ENCODE measurements at regions of chr17 and their contacts with region 1.

Region 1: DNA sequence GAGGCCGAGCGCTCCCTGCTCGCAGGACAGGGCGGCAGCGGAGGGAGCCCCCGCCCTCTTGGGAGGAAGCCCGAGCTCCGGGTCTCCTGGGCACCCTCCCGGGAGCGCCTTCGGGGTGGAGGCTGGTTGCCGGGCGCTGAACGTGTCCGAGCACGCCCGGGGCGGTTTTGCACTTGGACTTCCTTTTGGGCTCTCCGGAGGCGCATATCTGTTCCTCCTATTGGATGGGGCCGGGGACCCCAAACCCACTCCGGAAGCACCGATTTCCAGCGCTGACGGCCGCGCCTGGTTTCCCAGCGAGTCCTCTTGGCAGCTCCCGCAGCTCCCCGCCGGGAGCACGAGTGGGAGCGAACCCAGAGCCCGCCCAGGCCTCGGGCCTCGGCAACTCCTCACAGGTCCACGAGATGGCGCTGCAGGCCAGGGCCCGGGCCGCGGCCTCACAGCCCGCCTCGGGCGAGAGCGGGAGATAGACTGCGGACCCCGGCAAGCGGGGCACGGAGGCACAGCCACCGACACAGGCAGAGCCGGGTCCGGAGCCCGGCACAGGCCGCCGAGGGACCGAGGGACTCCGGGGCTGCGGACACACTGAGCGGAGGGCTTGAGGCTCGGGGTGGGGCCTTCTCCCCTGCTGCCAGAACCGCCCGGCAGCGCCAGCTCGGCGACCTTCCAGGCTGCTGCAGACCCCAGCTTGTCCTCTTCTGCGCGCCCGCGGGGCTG is 12.7 kb downstream of the TBX2 start:
- DNase-seq: peak; percentile 74
- H3K4me3 ChIP-seq: peak overlapping the region; percentile 62
- H3K27ac ChIP-seq: no peak overlapping the region
- H3K4me1 ChIP-seq: peaks cover 16% of the 10 kb centered on the region
- CTCF ChIP-seq: peak; percentile 92

Region 2: DNA sequence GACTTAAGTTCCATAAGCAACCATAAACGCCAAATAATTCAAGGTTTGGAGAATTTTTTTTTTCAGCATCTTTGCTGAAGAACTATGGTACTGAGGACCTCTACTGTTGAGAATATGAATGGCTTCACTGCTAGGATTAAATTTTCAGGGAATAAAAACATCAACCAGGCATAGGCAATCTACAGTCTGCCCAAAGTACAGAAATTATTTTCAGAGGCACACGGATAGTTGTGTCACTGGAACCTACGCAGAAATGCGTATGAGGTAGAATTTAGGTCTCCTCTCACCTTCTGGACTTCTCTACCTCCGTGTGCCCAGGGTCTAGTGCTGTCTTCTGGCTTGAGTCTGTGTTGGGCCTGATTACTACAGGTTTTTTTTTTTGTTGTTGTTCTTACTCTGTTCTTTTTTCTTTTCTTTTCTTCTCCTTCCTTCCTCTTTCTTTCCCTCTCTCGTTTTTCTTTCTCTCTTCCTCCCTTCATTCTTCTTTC is 139.0 kb after region 1 on chr17:
- CTCF ChIA-PET with region 1: no interaction called
- POLR2A ChIA-PET with region 1: no interaction called
- intact Hi-C with region 1: loop called (anchors 1 kb)
- DNase-seq: peak; percentile 58
- H3K4me3 ChIP-seq: no peak overlapping the region
- H3K27ac ChIP-seq: no peak overlapping the region
- H3K4me1 ChIP-seq: peaks cover 42% of the 10 kb centered on the region
- CTCF ChIP-seq: peak; percentile 90

Region 3: DNA sequence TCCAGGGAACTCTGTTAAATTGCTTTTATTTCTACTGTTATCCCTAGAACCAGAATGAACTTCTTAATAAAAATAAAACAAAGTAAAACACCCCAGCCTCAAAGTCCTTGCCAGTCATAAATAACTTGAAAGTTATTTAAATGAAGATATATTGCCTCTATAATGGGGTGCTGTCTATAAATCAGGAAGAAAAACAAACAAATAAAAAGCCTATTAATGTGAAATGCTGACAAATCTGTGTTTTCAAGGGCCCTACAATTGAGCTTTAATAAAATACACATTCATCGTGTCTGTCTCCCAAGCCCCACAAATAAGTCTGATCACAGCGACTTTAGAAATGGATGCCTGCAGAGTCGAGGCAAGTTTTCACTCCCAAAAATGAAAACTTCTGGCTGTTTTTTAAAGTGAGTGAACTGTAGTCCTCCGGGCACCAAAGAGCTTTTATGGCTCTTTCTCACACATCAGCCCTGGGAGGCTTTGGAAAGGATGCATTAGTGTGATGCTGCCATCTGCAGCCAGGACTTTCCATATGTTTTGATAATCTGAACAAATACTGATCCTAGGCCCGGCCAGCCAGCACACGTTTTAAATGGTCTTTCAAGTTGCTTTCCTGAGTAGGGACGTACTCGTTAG is 162.4 kb after region 1 on chr17:
- CTCF ChIA-PET with region 1: interaction called, 3 read pairs
- POLR2A ChIA-PET with region 1: interaction called, 3 read pairs
- intact Hi-C with region 1: loop called (anchors 1 kb)
- DNase-seq: peak; percentile 65
- H3K4me3 ChIP-seq: no peak overlapping the region
- H3K27ac ChIP-seq: no peak overlapping the region
- H3K4me1 ChIP-seq: no peaks in the 10 kb centered on the region
- CTCF ChIP-seq: peak; percentile 73

Region 4: GRCh38 chr17:61635913-61636432 is 223.7 kb after region 1 on chr17:
- CTCF ChIA-PET with region 1: no interaction called
- POLR2A ChIA-PET with region 1: no interaction called
- intact Hi-C with region 1: no loop called
- DNase-seq: peak; percentile 70
- H3K4me3 ChIP-seq: no peak overlapping the region
- H3K27ac ChIP-seq: no peak overlapping the region
- H3K4me1 ChIP-seq: no peaks in the 10 kb centered on the region
- CTCF ChIP-seq: peak; percentile 98

Region 5: DNA sequence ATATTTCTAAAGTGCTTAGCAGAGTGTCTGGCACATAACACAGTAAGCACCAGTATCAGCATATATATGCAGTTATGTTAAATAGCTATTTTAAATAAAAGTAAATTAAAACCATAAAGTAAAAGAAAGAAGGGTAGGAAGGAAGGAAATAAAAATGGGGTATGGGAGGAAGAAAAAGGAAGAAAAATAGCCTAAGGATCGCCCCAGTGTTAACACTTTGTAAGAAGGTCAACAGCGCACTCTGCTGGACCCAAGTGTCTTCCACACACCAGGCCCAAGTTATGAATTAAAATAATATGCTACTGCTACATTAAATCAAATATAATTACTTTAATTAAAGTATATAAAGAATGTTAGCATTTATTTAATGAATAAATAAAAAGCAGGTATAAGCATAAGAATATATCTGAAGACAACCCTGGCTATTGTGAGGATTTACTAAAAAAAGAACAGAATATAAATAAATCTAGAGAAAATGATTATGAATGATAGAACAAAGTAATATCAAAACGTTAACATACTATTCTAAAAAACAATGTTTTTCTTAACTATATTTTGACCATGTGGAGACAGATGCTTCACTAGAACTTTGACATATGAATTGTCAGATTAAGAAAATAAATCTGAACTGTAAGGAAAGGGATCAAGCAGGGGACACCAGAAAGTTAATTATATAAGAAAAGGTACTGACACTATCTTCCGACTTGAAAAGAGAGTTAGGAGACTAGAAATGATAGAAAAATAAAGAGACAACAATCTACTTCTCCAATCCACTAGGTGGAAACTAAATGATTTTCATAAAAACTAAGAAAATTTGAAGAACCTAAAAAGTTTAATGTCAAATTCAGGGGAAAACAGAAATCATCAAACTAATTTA is 425.1 kb after region 1 on chr17:
- CTCF ChIA-PET with region 1: no interaction called
- POLR2A ChIA-PET with region 1: no interaction called
- intact Hi-C with region 1: loop called (anchors 1 kb)
- DNase-seq: peak; percentile 76
- H3K4me3 ChIP-seq: no peak overlapping the region
- H3K27ac ChIP-seq: no peak overlapping the region
- H3K4me1 ChIP-seq: no peaks in the 10 kb centered on the region
- CTCF ChIP-seq: peak; percentile 94

Region 6: DNA sequence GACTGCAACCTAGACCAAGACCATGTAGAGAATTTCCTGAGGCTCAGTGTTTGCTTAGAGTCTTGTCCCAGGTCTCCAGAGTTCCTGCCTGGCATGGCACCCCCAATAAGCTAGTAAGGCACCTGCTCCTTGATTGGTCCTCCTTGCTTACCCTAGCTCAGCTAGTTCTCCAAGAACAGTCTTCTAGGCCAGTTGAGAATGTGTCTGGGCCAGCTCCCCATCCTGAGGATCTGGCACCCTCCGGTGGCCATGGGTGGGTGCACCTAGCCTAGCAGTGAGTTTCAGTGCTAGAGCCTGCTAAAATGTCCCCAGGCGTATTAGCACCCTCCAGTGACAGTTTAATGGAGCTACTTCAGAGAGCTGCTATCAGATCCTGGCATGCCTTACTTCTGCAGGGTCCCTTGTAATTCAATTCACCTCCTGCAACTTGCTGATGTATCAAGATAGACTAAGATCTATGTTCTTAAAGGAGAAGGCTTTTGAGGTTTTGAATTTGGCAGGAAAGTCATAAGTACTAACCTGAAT is 697.1 kb after region 1 on chr17:
- CTCF ChIA-PET with region 1: no interaction called
- POLR2A ChIA-PET with region 1: no interaction called
- intact Hi-C with region 1: loop called (anchors 1 kb)
- DNase-seq: peak; percentile 72
- H3K4me3 ChIP-seq: no peak overlapping the region
- H3K27ac ChIP-seq: no peak overlapping the region
- H3K4me1 ChIP-seq: no peaks in the 10 kb centered on the region
- CTCF ChIP-seq: peak; percentile 87

Measured in OCI-LY7 (cell line).